Activated naive CD4-positive, alpha-beta T cell treated with anti-CD3 and anti-CD28 coated beads for 36 hours (primary cell): ENCODE measurements at regions of chr6 and their contacts with region 1.

Region 1: GRCh38 chr6:53544470-53545308 is at the start of gene GCLC:
- DNase-seq: peak; percentile 88
- H3K4me3 Mint-ChIP-seq: peak within 1 kb of the TSS; percentile 94
- H3K27ac Mint-ChIP-seq: peak within 1 kb of the TSS; percentile 86
- H3K4me1 Mint-ChIP-seq: peaks cover 63% of the 10 kb centered on the region
- H3K27me3 Mint-ChIP-seq: no peaks in the 10 kb centered on the region
- total RNA-seq, gene GCLC: 13.9 to 18.1 TPM

Region 2: DNA sequence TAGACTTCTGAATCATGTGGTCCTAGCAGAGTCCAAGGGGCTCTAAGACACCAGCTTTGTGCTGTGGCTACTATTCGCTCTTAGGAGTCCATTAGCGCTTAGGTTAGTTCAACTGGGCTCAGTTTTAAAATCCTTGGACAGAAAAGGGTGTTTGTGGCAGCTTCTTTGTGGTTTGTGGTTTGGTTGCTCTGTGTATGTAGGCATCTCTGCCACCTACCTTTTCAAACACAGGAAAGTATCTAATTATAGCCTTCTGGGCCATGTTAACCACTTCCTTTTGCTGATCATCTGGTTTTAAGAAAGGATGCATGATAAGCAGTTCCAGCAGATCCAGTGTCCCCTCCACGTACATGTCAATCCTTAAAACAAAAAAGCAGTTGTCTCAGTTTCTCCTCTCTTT is 560.4 kb before region 1 on chr6:
- CTCF ChIA-PET with region 1: no interaction called
- intact Hi-C with region 1: loop called (anchors 2 kb)
- DNase-seq: peak; percentile 81
- H3K4me3 Mint-ChIP-seq: no peak overlapping the region
- H3K27ac Mint-ChIP-seq: peak overlapping the region; percentile 82
- H3K4me1 Mint-ChIP-seq: peaks cover 63% of the 10 kb centered on the region
- H3K27me3 Mint-ChIP-seq: peaks cover 8% of the 10 kb centered on the region

Region 3: DNA sequence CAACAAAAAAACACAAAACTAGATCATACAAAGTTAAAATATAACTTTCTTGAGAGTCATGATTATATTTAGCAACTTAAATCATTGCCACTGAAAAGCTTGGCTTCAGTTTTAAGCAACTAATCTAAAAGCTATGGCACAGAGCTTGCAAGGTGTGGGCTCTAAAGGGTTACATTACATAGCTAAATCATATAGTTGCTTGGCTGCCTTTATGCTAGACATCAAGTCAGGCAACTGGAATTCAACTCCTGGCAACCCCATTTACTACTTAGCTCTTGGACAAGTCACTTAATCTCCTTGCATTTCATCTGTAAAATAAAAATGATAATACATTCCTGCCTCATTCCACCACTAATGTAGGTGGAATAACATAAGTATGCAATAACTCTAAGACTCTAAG is 355.1 kb before region 1 on chr6:
- CTCF ChIA-PET with region 1: no interaction called
- intact Hi-C with region 1: loop called (anchors 5 kb)
- DNase-seq: no peak
- H3K4me3 Mint-ChIP-seq: no peak overlapping the region
- H3K27ac Mint-ChIP-seq: no peak overlapping the region
- H3K4me1 Mint-ChIP-seq: peaks cover 14% of the 10 kb centered on the region
- H3K27me3 Mint-ChIP-seq: no peaks in the 10 kb centered on the region

Region 4: GRCh38 chr6:53359072-53359842 is 185.4 kb before region 1 on chr6:
- CTCF ChIA-PET with region 1: no interaction called
- intact Hi-C with region 1: loop called (anchors 2 kb)
- DNase-seq: peak; percentile 94
- H3K4me3 Mint-ChIP-seq: peak overlapping the region; percentile 90
- H3K27ac Mint-ChIP-seq: peak overlapping the region; percentile 96
- H3K4me1 Mint-ChIP-seq: peaks cover 39% of the 10 kb centered on the region
- H3K27me3 Mint-ChIP-seq: no peaks in the 10 kb centered on the region

Region 5: DNA sequence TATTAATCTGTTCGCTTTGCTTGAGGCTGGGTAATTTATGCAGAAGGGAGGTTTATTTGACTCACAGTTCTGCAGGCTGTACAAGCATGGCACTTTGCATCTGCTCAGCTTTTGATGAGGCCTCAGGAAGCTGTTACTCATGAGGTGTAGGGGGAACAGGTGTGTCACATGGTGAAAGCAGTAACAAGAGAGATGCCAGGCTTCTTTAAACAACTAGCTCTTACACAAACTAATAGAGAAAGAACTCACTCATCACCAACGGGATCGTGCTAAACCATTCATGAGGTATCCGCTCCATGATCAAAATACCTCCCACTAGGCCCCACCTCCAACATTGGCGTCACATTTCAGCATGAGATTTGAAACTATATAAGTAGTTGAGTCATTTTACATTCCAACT is 34.6 kb after region 1 on chr6:
- CTCF ChIA-PET with region 1: no interaction called
- intact Hi-C with region 1: loop called (anchors 1 kb)
- DNase-seq: peak; percentile 70
- H3K4me3 Mint-ChIP-seq: no peak overlapping the region
- H3K27ac Mint-ChIP-seq: no peak overlapping the region
- H3K4me1 Mint-ChIP-seq: peaks cover 19% of the 10 kb centered on the region
- H3K27me3 Mint-ChIP-seq: no peaks in the 10 kb centered on the region

Region 6: GRCh38 chr6:53794720-53795253 is 250.1 kb after region 1 on chr6 and contains the start of gene LRRC1:
- CTCF ChIA-PET with region 1: no interaction called
- intact Hi-C with region 1: loop called (anchors 1 kb)
- DNase-seq: peak; percentile 82
- H3K4me3 Mint-ChIP-seq: peak within 1 kb of the TSS; percentile 95
- H3K27ac Mint-ChIP-seq: peak within 1 kb of the TSS; percentile 62
- H3K4me1 Mint-ChIP-seq: peaks cover 10% of the 10 kb centered on the region
- H3K27me3 Mint-ChIP-seq: peaks cover 19% of the 10 kb centered on the region
- total RNA-seq, gene LRRC1: 2.3 to 2.9 TPM